OCI-LY7 (cell line): ENCODE measurements at regions of chr11 and their contacts with region 1.

Region 1: DNA sequence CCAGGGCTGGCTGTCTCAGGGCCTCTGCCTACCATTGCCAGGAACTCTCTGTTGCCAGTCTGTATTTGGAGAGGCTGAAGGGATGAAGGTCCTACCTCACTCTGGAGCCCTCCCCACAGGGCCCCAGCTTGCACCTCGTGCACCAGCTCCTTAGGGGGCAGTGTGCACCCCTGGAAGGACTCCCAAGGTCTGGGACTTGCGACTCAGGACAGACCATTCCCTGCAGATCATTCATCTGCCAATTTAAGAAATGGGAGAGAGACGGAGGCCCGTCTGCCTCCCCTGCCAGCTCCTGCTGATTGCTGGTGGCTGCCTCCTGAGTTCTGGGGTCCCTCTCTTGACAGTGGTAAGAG is 27.5 kb upstream of the MALAT1 start:
- DNase-seq: peak; percentile 74
- H3K4me3 ChIP-seq: peak overlapping the region; percentile 54
- H3K27ac ChIP-seq: peak overlapping the region; percentile 53
- H3K4me1 ChIP-seq: peaks cover 40% of the 10 kb centered on the region
- CTCF ChIP-seq: peak; percentile 82

Region 2: DNA sequence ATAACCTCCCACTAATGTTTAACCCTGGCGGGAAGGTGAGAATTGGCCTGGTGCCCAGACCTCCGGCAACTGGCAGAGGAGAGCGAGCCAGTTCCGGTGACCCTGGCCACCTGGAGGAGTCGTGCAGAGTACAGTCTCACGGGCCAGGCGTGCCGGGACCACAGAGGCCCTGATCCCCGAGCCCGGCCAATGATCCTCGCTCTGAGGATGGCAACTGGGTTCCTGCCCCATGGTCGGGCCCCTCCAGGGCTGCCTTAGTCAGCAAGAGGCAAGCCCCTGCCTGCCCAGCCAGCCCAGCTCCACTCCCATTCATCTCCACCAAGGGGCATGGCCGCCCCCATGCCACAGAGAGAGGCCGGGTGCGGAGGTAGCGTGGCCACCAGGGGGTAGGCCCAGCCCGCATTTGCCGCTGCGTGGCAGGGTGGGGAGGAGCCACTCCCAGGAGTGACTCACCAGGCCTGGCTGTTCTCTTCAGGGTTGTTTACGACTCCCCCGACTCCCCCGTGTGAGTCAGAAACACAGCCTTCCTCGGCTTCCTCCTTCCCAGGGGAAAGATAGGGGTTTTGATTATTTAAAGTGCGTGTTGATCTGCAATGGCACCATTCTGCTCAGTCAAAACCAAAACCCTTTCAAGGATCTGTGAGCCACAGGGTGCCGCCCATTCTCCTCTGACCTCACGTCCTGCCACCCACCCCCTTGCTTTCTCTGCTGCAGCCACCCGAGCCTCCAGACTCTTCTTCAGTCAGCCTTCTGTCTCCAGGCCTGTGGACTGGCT is 89.2 kb before region 1 on chr11 and contains the start of gene SLC25A45:
- CTCF ChIA-PET with region 1: no interaction called
- POLR2A ChIA-PET with region 1: interaction called, 3 read pairs
- intact Hi-C with region 1: loop called (anchors 1 kb)
- DNase-seq: peak; percentile 86
- H3K4me3 ChIP-seq: peak within 1 kb of the TSS; percentile 68
- H3K27ac ChIP-seq: peak within 1 kb of the TSS; percentile 52
- H3K4me1 ChIP-seq: peaks cover 51% of the 10 kb centered on the region
- CTCF ChIP-seq: peak; percentile 84
- total RNA-seq, gene SLC25A45: 5.9 and 7.0 TPM in 2 replicates

Region 3: GRCh38 chr11:65497141-65498041 is 26.0 kb after region 1 on chr11:
- CTCF ChIA-PET with region 1: interaction called, 7 read pairs
- POLR2A ChIA-PET with region 1: interaction called, 121 read pairs
- intact Hi-C with region 1: no loop called
- DNase-seq: peak; percentile 99
- H3K4me3 ChIP-seq: peak overlapping the region; percentile 79
- H3K27ac ChIP-seq: peak overlapping the region; percentile 98
- H3K4me1 ChIP-seq: peaks cover 52% of the 10 kb centered on the region
- CTCF ChIP-seq: no peak

Region 4: GRCh38 chr11:65506770-65507505 is 35.6 kb after region 1 on chr11:
- CTCF ChIA-PET with region 1: interaction called, 5 read pairs
- POLR2A ChIA-PET with region 1: interaction called, 12 read pairs
- intact Hi-C with region 1: loop called (anchors 1 kb)
- DNase-seq: peak; percentile 71
- H3K4me3 ChIP-seq: peak overlapping the region; percentile 79
- H3K27ac ChIP-seq: peak overlapping the region; percentile 98
- H3K4me1 ChIP-seq: peaks cover 65% of the 10 kb centered on the region
- CTCF ChIP-seq: no peak